Dorsolateral prefrontal cortex (tissue), 120 donors: ENCODE measurements at regions of chr3 and their contacts with region 1.

Region 1: GRCh38 chr3:18988614-18989229 is 159.6 kb upstream of the KCNH8 start:
- DNase-seq: no peak
- H3K4me3 ChIP-seq: peak overlapping the region in 47 of 59 donors; percentile 3 to 58 (median 34)
- H3K27ac ChIP-seq: peak overlapping the region in 3 of 59 donors; percentile 4 to 12 (median 11)
- H3K27me3 ChIP-seq: no peaks in the 10 kb centered on the region
- CTCF ChIP-seq: peak; percentile 56 to 89 (median 74)

Region 2: GRCh38 chr3:18444595-18445400 is 543.9 kb before region 1 on chr3:
- intact Hi-C with region 1: loop called in 1 of 2 experiments (anchors 10 kb)
- DNase-seq: peak in 6 of 10 donors; percentile 36 to 63 (median 43)
- H3K4me3 ChIP-seq: peak overlapping the region; percentile 47 to 77 (median 64)
- H3K27ac ChIP-seq: peak overlapping the region in 41 of 59 donors; percentile 3 to 80 (median 57)
- H3K27me3 ChIP-seq: peaks cover 0 to 10% (median 0%) of the 10 kb centered on the region in 45 donors
- CTCF ChIP-seq: peak in 16 of 56 donors; percentile 6 to 59 (median 30)

Region 3: DNA sequence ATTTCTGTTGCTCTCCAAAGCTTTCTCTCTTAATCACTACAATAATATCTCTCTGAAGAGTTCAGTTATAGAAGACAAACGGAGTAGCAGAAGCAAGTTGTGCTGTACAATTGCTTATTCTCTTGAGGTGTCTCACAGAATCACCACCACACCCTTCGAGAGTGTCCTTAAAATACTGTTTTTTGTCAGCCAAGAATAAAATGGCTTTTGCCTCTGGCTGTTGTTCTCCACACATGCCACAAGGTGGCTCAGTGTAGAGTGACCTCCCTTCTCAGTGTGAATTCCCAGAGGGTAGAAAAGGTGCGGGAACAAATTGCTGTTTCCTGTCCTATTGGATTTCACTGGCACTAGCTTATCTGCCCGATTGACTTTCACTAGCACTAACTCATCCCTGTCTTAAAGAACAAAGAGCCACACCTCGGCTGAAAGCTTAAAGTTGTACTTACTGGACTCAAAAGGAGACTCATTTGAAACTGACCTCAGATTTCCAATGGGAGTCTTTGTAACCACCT is 429.3 kb before region 1 on chr3:
- intact Hi-C with region 1: loop called in 1 of 2 experiments (anchors 2 kb)
- DNase-seq: no peak
- H3K4me3 ChIP-seq: no peak overlapping the region
- H3K27ac ChIP-seq: no peak overlapping the region
- H3K27me3 ChIP-seq: peaks cover 0 to 4% (median 0%) of the 10 kb centered on the region in 45 donors
- CTCF ChIP-seq: peak; percentile 28 to 73 (median 59)

Region 4: GRCh38 chr3:18847583-18848197 is 141.0 kb before region 1 on chr3:
- intact Hi-C with region 1: loop called in 1 of 2 experiments (anchors 5 kb)
- DNase-seq: no peak
- H3K4me3 ChIP-seq: no peak overlapping the region
- H3K27ac ChIP-seq: no peak overlapping the region
- H3K27me3 ChIP-seq: peaks cover 0 to 4% (median 0%) of the 10 kb centered on the region in 45 donors
- CTCF ChIP-seq: peak in 46 of 56 donors; percentile 14 to 57 (median 33)

Region 5: GRCh38 chr3:18888368-18888767 is 100.4 kb before region 1 on chr3:
- intact Hi-C with region 1: loop called (anchors 5 kb)
- DNase-seq: no peak
- H3K4me3 ChIP-seq: no peak overlapping the region
- H3K27ac ChIP-seq: no peak overlapping the region
- H3K27me3 ChIP-seq: peaks cover 0 to 3% (median 0%) of the 10 kb centered on the region in 45 donors
- CTCF ChIP-seq: peak in 47 of 56 donors; percentile 10 to 70 (median 46)

Region 6: GRCh38 chr3:19025441-19025840 is 36.7 kb after region 1 on chr3:
- intact Hi-C with region 1: no loop called
- DNase-seq: no peak
- H3K4me3 ChIP-seq: no peak overlapping the region
- H3K27ac ChIP-seq: no peak overlapping the region
- H3K27me3 ChIP-seq: peaks cover 0 to 6% (median 0%) of the 10 kb centered on the region in 45 donors
- CTCF ChIP-seq: no peak